ENCODE measurements at regions of chr12 and their contacts with region 1.

Region 1: DNA sequence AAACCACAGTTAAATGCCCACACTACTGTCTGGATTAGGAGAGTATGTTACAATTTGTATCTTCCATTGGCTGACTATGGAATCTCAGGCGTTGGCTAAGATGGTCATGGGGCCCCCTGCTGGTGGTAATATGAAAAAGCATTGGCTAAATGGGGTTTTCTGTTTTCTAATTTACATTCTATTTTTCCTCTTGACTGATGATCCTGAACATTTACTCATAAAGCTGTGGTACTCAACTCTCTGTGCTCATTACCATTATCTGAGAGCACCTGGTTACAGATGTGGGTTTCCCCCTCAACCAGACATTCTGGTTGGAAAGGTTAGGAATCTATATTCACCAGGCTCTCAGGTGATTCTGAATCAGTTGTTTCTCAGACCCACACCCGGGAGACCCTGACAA is 64.8 kb downstream of the WSCD2 start:
- DNase-seq: no peak
- ATAC-seq: no peak

Region 2: DNA sequence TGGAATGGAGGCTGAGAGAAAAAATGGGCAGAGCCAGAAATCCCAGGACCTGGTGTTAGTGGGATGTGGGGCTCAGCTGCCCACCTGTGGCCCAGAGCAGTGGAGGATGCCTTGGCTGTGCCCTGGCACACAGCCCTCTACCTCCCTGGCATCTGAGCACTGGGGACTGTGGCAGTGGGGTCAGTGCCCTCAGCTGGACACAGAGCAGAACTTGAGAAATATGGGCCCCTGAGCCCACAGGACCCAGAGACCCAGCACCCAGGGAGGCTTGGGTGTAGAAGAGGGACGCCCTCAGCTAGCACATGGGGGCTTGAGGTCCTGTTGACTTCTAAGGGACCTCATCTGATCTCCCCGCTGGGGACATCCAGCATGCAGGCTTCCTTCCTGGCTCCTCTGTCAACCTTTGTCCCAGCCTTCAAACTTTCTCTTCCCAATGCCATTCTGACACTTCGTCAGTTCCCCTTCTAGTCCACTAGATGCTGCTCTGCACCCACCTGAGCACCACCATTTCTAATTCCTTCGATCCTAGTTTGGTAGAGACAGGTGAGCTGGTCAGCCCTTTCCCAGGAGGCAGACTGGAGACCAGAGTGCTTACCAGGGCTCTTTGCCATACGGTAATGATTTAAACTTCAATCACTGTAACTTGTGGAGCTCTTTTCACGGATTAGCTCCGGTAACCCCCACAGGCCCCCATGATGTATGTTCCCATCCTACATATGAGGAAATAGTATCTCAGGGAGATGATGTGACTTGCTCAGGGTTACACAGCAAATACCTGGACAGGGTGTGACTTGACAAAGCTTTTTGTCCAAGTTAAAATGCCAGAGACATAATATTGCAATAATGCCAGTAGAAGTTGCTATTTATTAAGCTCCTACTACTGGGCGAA is 275.8 kb before region 1 on chr12:
- intact Hi-C with region 1: loop called (anchors 5 kb)
- DNase-seq: no peak
- ATAC-seq: no peak

Region 3: GRCh38 chr12:107992870-107993451 is 201.0 kb before region 1 on chr12:
- intact Hi-C with region 1: loop called (anchors 10 kb)
- DNase-seq: no peak
- ATAC-seq: no peak

Region 4: DNA sequence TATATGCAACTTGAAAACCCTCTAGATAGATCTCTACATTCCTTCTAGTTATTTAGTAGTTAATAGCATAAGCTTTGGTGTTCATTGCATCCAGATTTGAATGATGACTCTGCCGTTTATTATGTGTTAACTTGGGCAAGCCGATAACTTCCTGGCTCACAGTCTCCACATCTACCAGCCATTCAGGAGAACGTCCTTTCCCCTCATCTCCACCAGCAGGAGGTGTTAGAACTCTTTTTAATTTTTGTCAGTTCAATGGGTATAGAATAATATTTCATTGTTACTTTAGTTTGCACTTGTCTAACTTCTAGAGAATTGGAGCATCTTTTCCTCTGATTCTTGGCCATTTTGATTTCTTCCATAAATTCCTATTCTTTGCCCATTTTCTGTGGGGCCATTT is 94.8 kb before region 1 on chr12:
- intact Hi-C with region 1: no loop called
- DNase-seq: no peak
- ATAC-seq: no peak

Region 5: DNA sequence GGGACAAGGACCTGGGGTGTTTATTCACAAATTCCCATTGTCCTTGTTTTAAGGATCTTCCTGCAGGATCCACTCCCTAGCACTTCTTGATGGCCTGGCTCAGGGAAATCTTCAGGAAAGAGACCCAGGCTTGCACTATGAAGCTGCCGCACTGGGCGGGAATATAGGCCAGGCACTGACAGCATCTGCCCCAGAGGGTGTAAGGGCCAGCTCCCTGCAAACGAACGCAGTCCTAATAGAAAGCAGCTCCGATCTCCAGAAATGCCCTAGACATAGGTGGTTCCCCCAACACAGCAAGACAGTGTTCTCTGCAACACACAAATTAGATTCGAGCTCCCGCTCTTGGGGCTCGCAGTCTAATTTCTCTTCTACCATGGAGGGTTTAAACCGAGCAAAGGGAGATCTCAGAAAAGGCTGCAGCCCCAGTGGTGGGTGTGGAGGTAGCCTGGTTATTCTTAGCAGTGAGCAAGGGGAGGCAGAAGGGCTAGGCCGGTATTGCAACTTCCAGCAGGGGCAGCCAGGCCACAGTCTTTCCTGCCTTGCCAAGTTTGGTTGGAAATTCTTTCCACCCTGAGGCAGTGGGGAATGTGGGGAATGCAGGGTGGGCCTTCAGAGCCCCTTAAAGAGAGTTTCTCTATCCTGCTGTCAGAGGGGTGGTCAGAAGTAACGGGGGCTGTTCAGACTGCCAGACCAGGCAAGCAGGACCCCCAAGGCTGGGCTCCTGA is 80.9 kb before region 1 on chr12:
- intact Hi-C with region 1: loop called (anchors 5 kb)
- DNase-seq: no peak
- ATAC-seq: peak; percentile 88

Region 6: GRCh38 chr12:108332791-108333382 is 139.0 kb after region 1 on chr12:
- intact Hi-C with region 1: no loop called
- DNase-seq: peak; percentile 65
- ATAC-seq: peak; percentile 73

Region 7: GRCh38 chr12:108394196-108394595 is 200.3 kb after region 1 on chr12:
- intact Hi-C with region 1: no loop called
- DNase-seq: peak; percentile 64
- ATAC-seq: peak; percentile 93